Activated CD4-positive, alpha-beta T cell treated with anti-CD3 and anti-CD28 coated beads for 36 hours (primary cell): ENCODE measurements at regions of chrX and their contacts with region 1.

Region 1: GRCh38 chrX:20141281-20142220 is at the start of gene EIF1AX:
- DNase-seq: peak; percentile 96
- ATAC-seq: peak; percentile 99
- H3K4me3 Mint-ChIP-seq: peak within 1 kb of the TSS; percentile 79
- H3K27ac Mint-ChIP-seq: peak within 1 kb of the TSS; percentile 84
- H3K4me1 Mint-ChIP-seq: peaks cover 39% of the 10 kb centered on the region
- H3K27me3 Mint-ChIP-seq: no peaks in the 10 kb centered on the region
- total RNA-seq, gene EIF1AX: 81.7 to 140 TPM

Region 2: GRCh38 chrX:20212486-20213089 is 71.0 kb after region 1 on chrX:
- CTCF ChIA-PET with region 1: no interaction called
- POLR2A ChIA-PET with region 1: no interaction called
- intact Hi-C with region 1: loop called in 1 of 2 experiments (anchors 5 kb)
- DNase-seq: no peak
- ATAC-seq: peak; percentile 90
- H3K4me3 Mint-ChIP-seq: no peak overlapping the region
- H3K27ac Mint-ChIP-seq: no peak overlapping the region
- H3K4me1 Mint-ChIP-seq: peaks cover 44% of the 10 kb centered on the region
- H3K27me3 Mint-ChIP-seq: no peaks in the 10 kb centered on the region

Region 3: DNA sequence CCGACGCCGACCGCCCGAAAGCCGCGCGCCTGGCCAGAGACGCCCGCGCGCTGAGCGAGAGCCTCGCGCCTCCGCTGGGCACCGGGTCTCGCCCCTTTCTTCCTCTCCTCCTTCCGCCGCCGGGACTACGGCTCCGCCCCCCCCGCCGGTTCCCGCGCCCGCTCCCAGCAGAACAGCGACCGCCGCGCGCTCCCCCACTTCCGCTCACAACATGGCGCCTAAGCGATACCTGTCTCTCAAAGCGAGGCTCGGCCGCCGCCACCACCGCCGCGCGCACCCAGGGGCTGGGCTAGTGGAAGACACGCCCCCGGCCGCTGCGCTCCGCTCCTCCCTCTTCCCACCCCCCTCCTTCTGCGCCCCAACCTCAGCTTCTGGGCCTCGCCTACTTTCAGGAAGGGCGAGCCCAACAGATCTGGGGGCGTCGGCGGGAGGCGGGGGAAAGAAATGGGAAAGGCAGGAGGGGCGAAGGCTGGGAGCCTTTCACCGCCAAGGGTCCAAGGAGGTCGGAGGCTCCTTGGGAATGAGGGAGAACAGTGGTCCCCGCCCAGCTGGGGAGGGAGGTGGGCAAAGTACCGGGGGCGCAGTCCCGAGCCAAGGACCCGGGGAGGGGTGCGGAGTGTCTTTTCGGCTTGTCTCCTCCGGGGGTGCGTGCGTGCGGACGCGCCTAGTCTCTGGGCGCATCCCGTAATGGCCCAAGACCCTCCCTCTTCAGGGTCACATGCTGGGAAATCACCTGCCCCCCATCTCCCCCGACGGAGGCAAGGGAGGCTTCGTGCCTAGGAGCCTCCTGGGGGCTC is 125.5 kb after region 1 on chrX and contains the start of gene RPS6KA3:
- CTCF ChIA-PET with region 1: no interaction called
- POLR2A ChIA-PET with region 1: no interaction called
- intact Hi-C with region 1: loop called (anchors 1 to 5 kb)
- DNase-seq: peak; percentile 94
- ATAC-seq: peak; percentile 83
- H3K4me3 Mint-ChIP-seq: peak within 1 kb of the TSS; percentile 82
- H3K27ac Mint-ChIP-seq: peak within 1 kb of the TSS; percentile 91
- H3K4me1 Mint-ChIP-seq: peaks cover 18% of the 10 kb centered on the region
- H3K27me3 Mint-ChIP-seq: no peaks in the 10 kb centered on the region
- total RNA-seq, gene RPS6KA3: 40.7 to 41.5 TPM

Region 4: DNA sequence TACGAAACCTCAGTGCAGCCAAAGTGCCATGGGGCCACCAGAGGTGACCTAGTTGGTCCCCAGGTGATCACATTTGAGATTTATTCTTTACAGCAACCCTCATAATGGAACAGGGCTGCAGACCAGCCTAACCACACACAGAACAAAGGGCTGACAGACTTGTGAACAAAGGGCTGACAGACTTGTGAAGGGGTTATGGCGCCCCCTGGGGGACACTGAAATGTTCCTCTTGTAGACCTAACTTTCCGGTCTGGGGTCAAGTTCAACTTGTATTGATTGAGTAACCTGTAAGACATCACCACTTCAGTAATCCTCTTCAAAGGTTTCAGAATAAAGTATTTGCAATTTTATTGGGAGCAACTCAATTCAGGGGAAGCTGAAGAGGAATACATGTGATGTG is 301.0 kb after region 1 on chrX:
- CTCF ChIA-PET with region 1: no interaction called
- POLR2A ChIA-PET with region 1: no interaction called
- intact Hi-C with region 1: loop called in 1 of 2 experiments (anchors 5 kb)
- DNase-seq: peak; percentile 91
- ATAC-seq: peak; percentile 87
- H3K4me3 Mint-ChIP-seq: no peak overlapping the region
- H3K27ac Mint-ChIP-seq: no peak overlapping the region
- H3K4me1 Mint-ChIP-seq: peaks cover 44% of the 10 kb centered on the region
- H3K27me3 Mint-ChIP-seq: no peaks in the 10 kb centered on the region

Region 5: GRCh38 chrX:20969002-20969401 is 827.5 kb after region 1 on chrX:
- CTCF ChIA-PET with region 1: no interaction called
- POLR2A ChIA-PET with region 1: no interaction called
- intact Hi-C with region 1: no loop called
- DNase-seq: no peak
- ATAC-seq: no peak
- H3K4me3 Mint-ChIP-seq: no peak overlapping the region
- H3K27ac Mint-ChIP-seq: no peak overlapping the region
- H3K4me1 Mint-ChIP-seq: no peaks in the 10 kb centered on the region
- H3K27me3 Mint-ChIP-seq: no peaks in the 10 kb centered on the region